ENCODE measurements at regions of chr6 and their contacts with region 1.

Region 1: GRCh38 chr6:17156112-17156921 is 54.5 kb downstream of the STMND1 start:
- DNase-seq: peak; percentile 49
- H3K4me3 ChIP-seq: no peak overlapping the region
- H3K27ac ChIP-seq: no peak overlapping the region
- H3K4me1 ChIP-seq: no peaks in the 10 kb centered on the region
- H3K27me3 ChIP-seq: no peaks in the 10 kb centered on the region
- CTCF ChIP-seq: peak; percentile 73 to 77

Region 2: DNA sequence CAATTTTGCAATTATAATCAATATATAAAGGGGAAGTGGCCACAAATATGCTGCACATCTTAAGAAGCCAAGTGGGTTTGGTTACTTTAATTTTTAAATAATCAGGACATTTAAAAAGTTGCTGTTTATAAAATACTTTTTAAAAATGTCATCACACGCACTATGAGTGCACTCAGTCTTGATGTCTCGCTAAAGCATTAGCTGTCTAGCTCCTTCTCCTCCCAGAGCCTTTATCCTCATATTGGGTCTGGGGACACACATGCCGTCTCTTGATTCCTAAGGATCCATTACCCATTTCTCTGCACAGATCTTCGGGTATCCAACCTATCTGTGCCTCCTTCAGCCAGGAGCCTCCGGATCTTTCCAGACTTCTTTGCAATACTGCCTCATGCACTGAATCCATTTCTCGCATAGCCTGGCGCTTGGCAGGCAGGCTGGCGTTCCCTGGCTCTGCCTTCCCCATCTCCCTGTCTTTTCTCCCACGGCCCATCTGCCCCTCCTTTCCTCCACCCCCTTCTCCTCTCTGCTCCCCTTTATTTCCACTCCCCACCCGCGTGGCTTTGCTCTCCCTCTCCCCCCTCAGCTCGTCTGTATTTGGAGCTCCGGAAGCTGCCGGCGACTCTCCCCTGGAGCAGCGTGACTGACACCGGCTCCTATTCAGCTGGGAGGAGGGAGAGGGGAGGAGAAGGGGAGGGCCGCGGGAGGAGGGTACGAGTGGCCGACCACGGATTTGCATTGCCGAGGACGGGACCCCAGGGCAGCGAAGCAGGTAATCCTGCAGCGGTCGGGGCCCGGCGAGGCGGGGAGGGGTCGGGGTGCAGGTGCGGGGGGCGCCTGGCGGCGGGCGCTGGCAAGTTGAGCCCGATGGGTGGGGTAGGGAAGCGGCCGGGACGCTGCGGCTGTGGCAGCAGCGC is 236.9 kb after region 1 on chr6 and contains the start of gene CAP2:
- CTCF ChIA-PET with region 1: no interaction called
- dilution Hi-C with region 1: no loop called
- in situ Hi-C with region 1: no loop called
- intact Hi-C with region 1: loop called (anchors 10 kb)
- DNase-seq: peak; percentile 62
- H3K4me3 ChIP-seq: peak within 1 kb of the TSS; percentile 62 to 73 (median 71)
- H3K27ac ChIP-seq: peak within 1 kb of the TSS; percentile 55
- H3K4me1 ChIP-seq: peaks cover 14% of the 10 kb centered on the region
- H3K27me3 ChIP-seq: no peaks in the 10 kb centered on the region
- CTCF ChIP-seq: peak in 1 of 2 donors; percentile 11
- total RNA-seq, gene CAP2: 7.2 to 8.4 TPM

Region 3: GRCh38 chr6:17589406-17590096 is 433.2 kb after region 1 on chr6:
- CTCF ChIA-PET with region 1: no interaction called
- dilution Hi-C with region 1: loop called (anchors 25 kb)
- in situ Hi-C with region 1: loop called (anchors 5 kb)
- intact Hi-C with region 1: loop called (anchors 1 kb)
- DNase-seq: peak; percentile 91
- H3K4me3 ChIP-seq: no peak overlapping the region
- H3K27ac ChIP-seq: peak overlapping the region; percentile 42
- H3K4me1 ChIP-seq: peaks cover 12% of the 10 kb centered on the region
- H3K27me3 ChIP-seq: no peaks in the 10 kb centered on the region
- CTCF ChIP-seq: peak in 1 of 2 donors; percentile 32

Region 4: DNA sequence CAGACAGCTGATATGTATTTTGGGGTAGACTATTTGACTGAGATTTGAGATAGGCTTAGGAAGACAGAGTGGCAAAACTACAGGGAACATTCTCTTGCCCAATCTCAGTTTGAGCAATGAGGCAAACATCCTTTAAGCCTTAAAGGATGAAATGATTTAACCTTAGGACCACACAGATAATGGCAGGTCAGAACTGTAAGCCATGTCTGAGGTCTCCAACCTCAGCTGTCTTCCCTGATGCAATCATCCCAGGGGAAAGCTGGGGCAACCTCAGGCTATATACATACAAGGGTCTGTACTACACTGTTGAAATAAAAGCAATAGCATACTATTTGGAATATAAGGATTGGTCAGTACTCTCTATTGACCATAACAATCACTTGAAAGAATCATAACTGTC is 634.2 kb after region 1 on chr6:
- CTCF ChIA-PET with region 1: no interaction called
- dilution Hi-C with region 1: loop called (anchors 25 kb)
- in situ Hi-C with region 1: loop called in 1 of 2 experiments (anchors 25 kb)
- intact Hi-C with region 1: no loop called
- DNase-seq: no peak
- H3K4me3 ChIP-seq: no peak overlapping the region
- H3K27ac ChIP-seq: no peak overlapping the region
- H3K4me1 ChIP-seq: no peaks in the 10 kb centered on the region
- H3K27me3 ChIP-seq: no peaks in the 10 kb centered on the region
- CTCF ChIP-seq: no peak

Region 5: GRCh38 chr6:17820055-17820454 is 663.7 kb after region 1 on chr6:
- CTCF ChIA-PET with region 1: no interaction called
- dilution Hi-C with region 1: no loop called
- in situ Hi-C with region 1: loop called in 1 of 2 experiments (anchors 25 kb)
- intact Hi-C with region 1: no loop called
- DNase-seq: no peak
- H3K4me3 ChIP-seq: no peak overlapping the region
- H3K27ac ChIP-seq: no peak overlapping the region
- H3K4me1 ChIP-seq: no peaks in the 10 kb centered on the region
- H3K27me3 ChIP-seq: no peaks in the 10 kb centered on the region
- CTCF ChIP-seq: no peak